ENCODE measurements at regions of chr10 and their contacts with region 1.

Region 1: DNA sequence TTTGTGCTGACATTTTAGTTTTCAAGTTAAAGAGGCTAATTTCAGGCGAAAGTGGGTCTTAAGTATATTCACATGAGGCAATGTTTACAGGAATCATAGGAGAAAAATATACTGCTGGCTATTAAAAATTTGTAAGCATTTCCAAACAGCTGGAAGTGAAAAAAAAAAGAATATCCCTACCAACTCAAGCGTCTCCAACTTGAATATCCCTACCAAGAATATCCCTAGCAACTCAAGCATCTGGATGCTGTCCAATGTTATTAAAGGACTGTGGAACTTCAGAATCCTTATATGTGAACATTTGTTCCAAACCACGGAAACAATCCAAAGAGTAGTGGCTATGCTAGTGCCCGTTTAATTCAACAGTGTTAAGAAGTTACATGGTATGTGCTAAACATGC is 1303.0 kb downstream of the GATA3 start:
- ATAC-seq: no peak
- H3K4me3 ChIP-seq: no peak overlapping the region
- H3K27ac ChIP-seq: no peak overlapping the region
- H3K4me1 ChIP-seq: no peaks in the 10 kb centered on the region

Region 2: DNA sequence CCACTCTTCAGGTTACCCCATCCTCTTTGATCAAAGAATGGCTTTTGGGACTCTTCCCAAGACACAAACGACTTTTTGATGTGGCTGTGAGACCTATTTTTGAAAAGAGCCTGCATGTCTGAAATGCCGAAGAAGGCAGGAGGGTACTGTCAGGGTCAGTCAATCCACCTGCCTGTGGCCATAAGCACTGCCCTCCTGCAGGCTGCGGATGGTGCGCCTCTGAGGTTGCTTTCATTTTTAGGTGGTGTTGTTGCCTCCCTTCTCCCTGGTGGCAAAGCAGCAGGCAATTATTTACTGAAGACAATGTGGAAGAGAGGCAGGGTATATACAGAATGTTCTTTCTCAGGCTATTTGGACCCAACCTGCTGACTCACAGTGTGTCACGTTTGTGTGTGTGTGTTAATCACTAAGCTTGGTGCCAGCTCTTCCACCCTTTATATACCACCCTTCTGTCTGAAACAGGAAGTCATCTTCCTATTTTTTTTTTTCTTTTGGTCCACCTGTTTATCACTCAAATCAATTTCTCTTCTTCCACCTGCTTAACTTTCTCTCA is 239.0 kb after region 1 on chr10:
- in situ Hi-C with region 1: loop called in 1 of 9 experiments (anchors 25 kb)
- ATAC-seq: peak in 1 of 8 experiments; percentile 38
- H3K4me3 ChIP-seq: no peak overlapping the region
- H3K27ac ChIP-seq: no peak overlapping the region
- H3K4me1 ChIP-seq: no peaks in the 10 kb centered on the region

Region 3: GRCh38 chr10:9869205-9869604 is 511.7 kb after region 1 on chr10:
- in situ Hi-C with region 1: no loop called
- ATAC-seq: no peak
- H3K4me3 ChIP-seq: no peak overlapping the region
- H3K27ac ChIP-seq: no peak overlapping the region
- H3K4me1 ChIP-seq: no peaks in the 10 kb centered on the region

Measured in motor neuron (in vitro differentiated cells).